Right lobe of liver (tissue), 6 donors: ENCODE measurements at regions of chr9 and their contacts with region 1.

Region 1: GRCh38 chr9:91036826-91037510 is 235.3 kb downstream of the SYK start:
- DNase-seq: peak; percentile 86 to 92 (median 90)
- ATAC-seq: peak; percentile 92 to 97 (median 96)
- H3K4me3 ChIP-seq: peak overlapping the region in 2 of 3 donors; percentile 19 to 23
- H3K27ac ChIP-seq: peak overlapping the region; percentile 59 to 87 (median 65)
- H3K4me1 ChIP-seq: peaks cover 0 to 22% (median 9%) of the 10 kb centered on the region in 4 donors
- H3K27me3 ChIP-seq: no peaks in the 10 kb centered on the region
- CTCF ChIP-seq: peak; percentile 69 to 75 (median 70)
- POLR2A ChIP-seq: peak; percentile 58

Region 2: GRCh38 chr9:91422758-91423711 is 386.1 kb after region 1 on chr9:
- intact Hi-C with region 1: loop called in 1 of 2 experiments (anchors 5 kb)
- DNase-seq: peak; percentile 56 to 82 (median 70)
- ATAC-seq: peak; percentile 5 to 44 (median 15)
- H3K4me3 ChIP-seq: peak overlapping the region; percentile 60 to 69 (median 67)
- H3K27ac ChIP-seq: peak overlapping the region; percentile 94 to 100 (median 96)
- H3K4me1 ChIP-seq: peaks cover 0 to 25% (median 3%) of the 10 kb centered on the region in 4 donors
- H3K27me3 ChIP-seq: no peaks in the 10 kb centered on the region
- CTCF ChIP-seq: peak in 3 of 4 donors; percentile 6 to 21 (median 10)
- POLR2A ChIP-seq: peak; percentile 83

Region 3: GRCh38 chr9:91483189-91483691 is 446.3 kb after region 1 on chr9:
- intact Hi-C with region 1: no loop called
- DNase-seq: no peak
- ATAC-seq: peak in 1 of 4 donors; percentile 19
- H3K4me3 ChIP-seq: no peak overlapping the region
- H3K27ac ChIP-seq: no peak overlapping the region
- H3K4me1 ChIP-seq: no peaks in the 10 kb centered on the region
- H3K27me3 ChIP-seq: no peaks in the 10 kb centered on the region
- CTCF ChIP-seq: no peak
- POLR2A ChIP-seq: no peak